MCF 10A (cell line): ENCODE measurements at regions of chr15 and their contacts with region 1.

Region 1: GRCh38 chr15:84035399-84035766 is 200.2 kb upstream of the GOLGA6L4 start:
- DNase-seq: peak; percentile 51
- H3K4me3 Mint-ChIP-seq: no peak overlapping the region
- H3K27ac Mint-ChIP-seq: no peak overlapping the region
- H3K4me1 Mint-ChIP-seq: no peaks in the 10 kb centered on the region
- H3K27me3 Mint-ChIP-seq: no peaks in the 10 kb centered on the region
- CTCF ChIP-seq: peak; percentile 33

Region 2: DNA sequence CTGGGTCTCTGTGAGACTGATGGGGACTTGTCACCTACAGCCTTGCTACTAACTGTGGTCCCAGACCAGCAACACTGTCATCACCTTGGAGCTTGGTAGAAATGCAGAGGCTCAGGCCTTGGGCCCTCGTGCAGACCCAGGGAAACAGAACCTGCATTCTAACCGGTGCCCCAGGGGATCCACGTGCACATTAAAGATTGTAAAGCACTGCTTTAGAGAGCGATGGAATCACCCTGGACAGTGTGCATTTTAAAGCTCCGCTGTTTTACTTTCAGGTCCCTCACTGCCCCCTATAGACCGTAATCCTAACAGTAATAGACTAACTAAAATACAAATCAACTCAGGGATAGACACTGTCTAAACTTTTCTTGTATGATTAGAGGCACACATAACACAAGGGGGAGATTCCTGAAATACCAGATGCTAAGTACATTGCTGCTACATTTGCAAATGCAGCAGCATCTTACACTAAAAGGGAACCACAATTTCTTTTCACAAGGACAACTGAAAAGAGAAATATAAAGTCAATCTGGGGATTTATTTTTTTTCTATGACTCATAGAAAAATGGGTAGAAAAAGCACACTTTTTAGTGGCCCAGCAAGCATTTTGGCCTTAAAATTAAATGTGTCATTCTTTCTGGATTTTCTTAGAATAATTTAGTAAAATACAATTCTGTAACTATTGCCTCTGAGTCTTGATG is 598.8 kb before region 1 on chr15:
- CTCF ChIA-PET with region 1: interaction called, 6 read pairs
- POLR2A ChIA-PET with region 1: no interaction called
- intact Hi-C with region 1: loop called (anchors 2 kb)
- DNase-seq: peak; percentile 74
- H3K4me3 Mint-ChIP-seq: no peak overlapping the region
- H3K27ac Mint-ChIP-seq: no peak overlapping the region
- H3K4me1 Mint-ChIP-seq: peaks cover 20% of the 10 kb centered on the region
- H3K27me3 Mint-ChIP-seq: no peaks in the 10 kb centered on the region
- CTCF ChIP-seq: peak; percentile 59

Region 3: GRCh38 chr15:83564975-83565532 is 470.3 kb before region 1 on chr15:
- CTCF ChIA-PET with region 1: interaction called, 68 read pairs
- POLR2A ChIA-PET with region 1: interaction called, 4 read pairs
- intact Hi-C with region 1: loop called (anchors 2 kb)
- DNase-seq: no peak
- H3K4me3 Mint-ChIP-seq: no peak overlapping the region
- H3K27ac Mint-ChIP-seq: no peak overlapping the region
- H3K4me1 Mint-ChIP-seq: peaks cover 6% of the 10 kb centered on the region
- H3K27me3 Mint-ChIP-seq: no peaks in the 10 kb centered on the region
- CTCF ChIP-seq: no peak

Region 4: DNA sequence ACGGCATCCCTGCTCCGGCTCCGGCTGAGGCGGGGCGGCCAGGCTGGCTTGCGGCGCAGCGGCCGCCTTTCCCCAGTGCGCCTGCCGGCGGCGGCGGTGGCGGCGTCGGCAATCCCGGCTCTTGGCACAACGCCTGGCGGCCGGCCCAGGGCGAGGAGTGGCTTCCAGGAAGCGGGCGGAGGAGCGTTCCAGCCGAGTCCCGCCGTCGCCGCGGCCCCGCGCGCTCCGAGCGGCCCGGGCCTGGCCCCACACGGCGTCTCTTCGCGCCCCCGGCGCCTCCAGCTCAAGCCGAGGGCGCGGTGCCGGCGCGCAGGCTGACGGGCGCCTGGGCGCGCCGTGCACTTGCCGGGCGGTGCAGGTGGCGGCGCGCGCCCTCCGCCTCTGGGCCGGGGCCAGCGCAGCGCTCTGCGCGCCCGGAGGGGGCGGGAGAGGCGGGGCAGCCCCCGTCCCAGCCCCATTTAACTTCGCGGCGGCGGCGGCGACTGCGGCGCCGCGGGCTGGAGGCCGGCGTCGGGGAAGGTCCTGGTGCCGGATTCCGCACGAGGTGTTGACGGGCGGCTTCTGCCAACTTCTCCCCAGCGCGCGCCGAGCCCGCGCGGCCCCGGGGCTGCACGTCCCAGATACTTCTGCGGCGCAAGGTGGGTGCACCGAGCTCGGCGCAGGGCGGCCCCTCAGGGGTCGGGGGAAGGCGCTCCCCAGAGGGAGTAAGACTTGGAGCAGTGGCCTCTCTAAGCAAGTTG is 381.6 kb before region 1 on chr15 and contains the start of gene ADAMTSL3:
- CTCF ChIA-PET with region 1: interaction called, 11 read pairs
- POLR2A ChIA-PET with region 1: no interaction called
- intact Hi-C with region 1: loop called (anchors 5 kb)
- DNase-seq: peak; percentile 71
- H3K4me3 Mint-ChIP-seq: peak within 1 kb of the TSS; percentile 50
- H3K27ac Mint-ChIP-seq: no peak within 1 kb of the TSS
- H3K4me1 Mint-ChIP-seq: no peaks in the 10 kb centered on the region
- H3K27me3 Mint-ChIP-seq: no peaks in the 10 kb centered on the region
- CTCF ChIP-seq: no peak
- total RNA-seq, gene ADAMTSL3: 1.2 TPM in 2 replicates

Region 5: GRCh38 chr15:83747050-83747717 is 288.2 kb before region 1 on chr15:
- CTCF ChIA-PET with region 1: interaction called, 5 read pairs
- POLR2A ChIA-PET with region 1: no interaction called
- intact Hi-C with region 1: loop called (anchors 1 kb)
- DNase-seq: peak; percentile 60
- H3K4me3 Mint-ChIP-seq: peak overlapping the region; percentile 37
- H3K27ac Mint-ChIP-seq: no peak overlapping the region
- H3K4me1 Mint-ChIP-seq: peaks cover 10% of the 10 kb centered on the region
- H3K27me3 Mint-ChIP-seq: no peaks in the 10 kb centered on the region
- CTCF ChIP-seq: peak; percentile 33

Region 6: GRCh38 chr15:84023636-84024035 is 11.7 kb before region 1 on chr15:
- CTCF ChIA-PET with region 1: interaction called, 46 read pairs
- POLR2A ChIA-PET with region 1: no interaction called
- intact Hi-C with region 1: no loop called
- DNase-seq: peak; percentile 69
- H3K4me3 Mint-ChIP-seq: no peak overlapping the region
- H3K27ac Mint-ChIP-seq: no peak overlapping the region
- H3K4me1 Mint-ChIP-seq: no peaks in the 10 kb centered on the region
- H3K27me3 Mint-ChIP-seq: no peaks in the 10 kb centered on the region
- CTCF ChIP-seq: peak; percentile 42